Right ventricle myocardium inferior (tissue), 1 donor: ENCODE measurements at regions of chr5 and their contacts with region 1.

Region 1: GRCh38 chr5:90709323-90710155 is 150.9 kb downstream of the ADGRV1 start:
- DNase-seq: no peak
- ATAC-seq: no peak

Region 2: DNA sequence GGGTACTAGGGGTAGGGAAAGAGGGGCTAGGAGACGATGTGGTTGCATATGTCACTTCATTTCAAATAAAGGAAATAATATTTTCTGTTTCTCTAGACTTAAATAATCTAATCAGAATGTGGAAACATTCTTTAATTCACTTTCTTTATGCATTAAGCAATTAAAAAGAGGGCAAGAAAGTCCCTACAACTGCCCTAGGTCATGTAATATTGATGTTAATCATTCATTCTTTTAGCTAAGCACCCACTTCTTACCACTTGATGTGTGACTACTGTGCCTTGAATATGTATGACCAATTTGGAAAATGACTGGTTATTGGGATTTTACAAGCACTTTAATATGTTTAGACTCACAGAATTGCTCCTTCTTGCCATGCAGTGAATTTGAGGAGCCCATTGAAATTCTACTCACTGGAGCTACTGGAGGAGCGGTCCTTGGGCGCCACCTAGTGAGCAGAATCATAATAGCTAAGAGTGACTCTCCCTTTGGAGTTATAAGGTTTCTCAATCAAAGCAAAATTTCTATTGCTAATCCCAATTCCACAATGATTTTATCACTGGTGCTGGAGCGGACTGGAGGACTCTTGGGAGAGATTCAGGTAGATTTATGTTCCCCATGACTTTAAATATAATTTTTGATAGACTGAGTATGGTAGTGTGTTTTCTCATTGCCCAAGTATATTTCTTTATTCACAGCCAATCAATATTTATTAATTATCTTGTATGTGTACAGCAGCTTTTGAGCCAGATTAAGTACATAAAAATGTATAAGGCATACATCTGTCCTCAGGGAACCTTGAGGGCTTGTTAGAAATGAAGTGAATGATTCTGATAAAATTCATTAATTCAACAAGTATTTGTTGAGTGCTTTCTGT is 74.2 kb after region 1 on chr5:
- intact Hi-C with region 1: loop called (anchors 10 kb)
- DNase-seq: no peak
- ATAC-seq: peak; percentile 46

Region 3: DNA sequence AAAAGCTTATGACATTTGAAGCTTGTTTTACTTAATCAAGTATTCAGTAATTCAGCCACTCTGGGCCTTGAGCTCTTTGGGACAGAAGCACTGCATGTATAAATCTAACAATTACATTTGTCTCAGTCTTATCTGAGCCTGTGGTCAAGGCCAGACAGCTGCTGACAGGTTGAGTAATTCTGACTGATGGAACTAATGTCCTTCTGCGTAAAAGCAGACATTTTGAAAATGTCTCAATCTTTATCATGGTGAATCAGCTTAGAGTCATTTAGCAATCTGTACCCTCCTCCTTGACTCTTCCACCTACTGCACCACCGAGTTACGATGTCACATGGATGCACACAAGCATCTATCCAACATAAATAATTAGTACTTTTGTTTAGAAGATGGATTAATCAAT is 273.6 kb after region 1 on chr5:
- intact Hi-C with region 1: no loop called
- DNase-seq: no peak
- ATAC-seq: peak; percentile 13